Psoas muscle (tissue), 8 donors: ENCODE measurements at regions of chr11 and their contacts with region 1.

Region 1: DNA sequence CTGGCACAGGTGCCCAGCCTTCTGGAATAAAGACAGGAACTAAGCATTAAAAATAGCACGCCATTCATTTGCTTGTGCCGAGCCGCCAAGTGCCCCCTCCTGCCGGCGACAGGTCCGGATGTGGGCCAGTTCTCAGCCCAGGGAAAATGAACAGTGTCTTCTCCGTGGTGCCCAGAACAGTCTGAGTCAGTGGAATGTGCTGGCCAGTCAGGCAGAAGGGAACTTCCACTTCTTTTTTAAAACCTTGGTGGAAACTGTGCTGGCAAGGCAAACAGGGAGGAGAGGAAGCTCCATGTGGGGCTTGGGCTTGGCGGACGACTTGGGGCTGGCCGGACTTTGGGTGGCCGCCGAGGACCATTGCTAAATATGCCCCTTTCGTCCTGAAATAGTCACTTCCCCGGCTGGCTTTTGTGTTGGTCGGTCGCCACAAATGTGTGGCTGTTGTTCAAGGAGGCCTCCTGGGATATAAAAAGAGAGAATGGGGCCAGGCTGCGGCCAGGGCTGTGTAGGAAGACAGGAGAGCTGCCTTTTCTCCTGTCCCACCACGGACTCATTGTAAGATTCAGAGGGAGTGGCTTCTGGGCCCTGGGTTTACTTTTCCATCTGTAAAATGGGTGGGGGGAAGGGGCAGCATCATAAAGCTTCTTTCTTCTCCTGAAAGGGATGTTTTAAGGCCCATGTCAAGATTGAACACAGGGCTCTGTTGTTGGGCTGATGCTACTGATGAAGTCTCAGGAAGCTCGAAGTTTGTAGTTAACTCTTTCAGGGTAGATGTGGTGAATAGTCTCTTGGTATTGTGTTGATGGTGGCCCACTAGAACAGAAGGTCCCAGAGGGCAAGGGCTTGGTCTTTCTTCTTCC is 101.0 kb downstream of the PTPRJ start:
- DNase-seq: peak; percentile 86 to 92
- ATAC-seq: peak; percentile 96 to 98 (median 97)
- H3K4me3 ChIP-seq: peak overlapping the region; percentile 48
- H3K27ac ChIP-seq: peak overlapping the region; percentile 90
- H3K4me1 ChIP-seq: peaks cover 23% of the 10 kb centered on the region
- H3K27me3 ChIP-seq: no peaks in the 10 kb centered on the region
- CTCF ChIP-seq: no peak

Region 2: DNA sequence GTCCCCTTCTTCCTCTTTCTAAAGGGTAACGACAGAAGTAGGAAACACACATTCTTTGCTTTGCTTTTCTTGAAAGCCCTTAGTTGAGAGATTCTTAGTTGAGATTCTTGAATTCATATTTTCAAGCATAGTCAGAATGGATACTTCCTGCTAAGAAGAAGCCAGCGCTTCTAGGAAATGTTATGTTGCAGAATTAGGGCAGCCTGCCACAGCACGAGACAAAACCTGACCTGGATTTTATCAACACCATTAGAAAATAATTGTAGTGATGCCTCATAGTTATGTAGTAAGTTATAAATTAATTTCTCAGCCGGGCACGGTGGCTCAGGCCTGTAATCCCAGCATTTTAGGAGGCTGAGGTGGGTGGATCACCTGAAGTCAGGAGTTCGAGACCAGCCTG is 195.3 kb before region 1 on chr11:
- intact Hi-C with region 1: no loop called
- DNase-seq: peak in 1 of 2 donors; percentile 39
- ATAC-seq: no peak
- H3K4me3 ChIP-seq: no peak overlapping the region
- H3K27ac ChIP-seq: no peak overlapping the region
- H3K4me1 ChIP-seq: no peaks in the 10 kb centered on the region
- H3K27me3 ChIP-seq: no peaks in the 10 kb centered on the region
- CTCF ChIP-seq: no peak

Region 3: GRCh38 chr11:48001438-48002021 is 79.9 kb before region 1 on chr11:
- intact Hi-C with region 1: no loop called
- DNase-seq: no peak
- ATAC-seq: peak in 3 of 4 donors; percentile 20 to 49 (median 30)
- H3K4me3 ChIP-seq: no peak overlapping the region
- H3K27ac ChIP-seq: no peak overlapping the region
- H3K4me1 ChIP-seq: peaks cover 19% of the 10 kb centered on the region
- H3K27me3 ChIP-seq: no peaks in the 10 kb centered on the region
- CTCF ChIP-seq: no peak

Region 4: DNA sequence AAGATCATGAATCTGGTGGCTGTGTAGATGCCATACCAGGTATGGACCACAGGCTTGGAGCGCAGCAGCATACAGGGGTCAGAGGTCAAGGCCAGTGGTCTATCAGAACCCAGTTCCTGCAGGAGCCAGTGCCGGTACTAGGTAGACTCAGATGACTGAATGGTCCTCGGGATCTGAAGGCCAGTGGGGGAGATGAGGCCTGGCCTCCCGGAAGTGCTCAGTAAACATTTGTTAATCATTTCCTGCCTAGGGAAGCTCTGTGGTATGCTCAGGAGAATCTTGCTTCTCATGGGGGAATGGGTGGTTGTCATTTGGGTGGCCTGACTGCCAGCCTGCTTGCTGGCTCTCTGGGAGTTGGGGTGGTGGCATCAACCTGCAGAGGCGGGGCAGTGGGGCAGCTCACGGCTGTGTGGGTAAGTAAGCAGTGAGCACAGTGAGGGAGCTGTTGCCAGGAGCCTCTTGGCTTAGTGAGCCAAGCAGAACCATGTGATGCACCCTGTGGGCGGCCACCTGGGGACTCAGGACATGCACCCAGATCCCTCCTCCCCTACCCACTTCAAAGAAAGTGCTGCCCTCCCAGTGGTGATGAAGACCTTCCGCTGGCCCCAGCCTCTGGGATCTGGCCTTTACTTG is 68.0 kb before region 1 on chr11:
- intact Hi-C with region 1: no loop called
- DNase-seq: no peak
- ATAC-seq: peak in 3 of 4 donors; percentile 33 to 50 (median 49)
- H3K4me3 ChIP-seq: no peak overlapping the region
- H3K27ac ChIP-seq: no peak overlapping the region
- H3K4me1 ChIP-seq: no peaks in the 10 kb centered on the region
- H3K27me3 ChIP-seq: no peaks in the 10 kb centered on the region
- CTCF ChIP-seq: no peak

Region 5: GRCh38 chr11:48024635-48025071 is 56.7 kb before region 1 on chr11:
- intact Hi-C with region 1: no loop called
- DNase-seq: peak in 1 of 2 donors; percentile 53
- ATAC-seq: peak; percentile 51 to 68 (median 64)
- H3K4me3 ChIP-seq: no peak overlapping the region
- H3K27ac ChIP-seq: peak overlapping the region; percentile 68
- H3K4me1 ChIP-seq: peaks cover 22% of the 10 kb centered on the region
- H3K27me3 ChIP-seq: no peaks in the 10 kb centered on the region
- CTCF ChIP-seq: no peak

Region 6: DNA sequence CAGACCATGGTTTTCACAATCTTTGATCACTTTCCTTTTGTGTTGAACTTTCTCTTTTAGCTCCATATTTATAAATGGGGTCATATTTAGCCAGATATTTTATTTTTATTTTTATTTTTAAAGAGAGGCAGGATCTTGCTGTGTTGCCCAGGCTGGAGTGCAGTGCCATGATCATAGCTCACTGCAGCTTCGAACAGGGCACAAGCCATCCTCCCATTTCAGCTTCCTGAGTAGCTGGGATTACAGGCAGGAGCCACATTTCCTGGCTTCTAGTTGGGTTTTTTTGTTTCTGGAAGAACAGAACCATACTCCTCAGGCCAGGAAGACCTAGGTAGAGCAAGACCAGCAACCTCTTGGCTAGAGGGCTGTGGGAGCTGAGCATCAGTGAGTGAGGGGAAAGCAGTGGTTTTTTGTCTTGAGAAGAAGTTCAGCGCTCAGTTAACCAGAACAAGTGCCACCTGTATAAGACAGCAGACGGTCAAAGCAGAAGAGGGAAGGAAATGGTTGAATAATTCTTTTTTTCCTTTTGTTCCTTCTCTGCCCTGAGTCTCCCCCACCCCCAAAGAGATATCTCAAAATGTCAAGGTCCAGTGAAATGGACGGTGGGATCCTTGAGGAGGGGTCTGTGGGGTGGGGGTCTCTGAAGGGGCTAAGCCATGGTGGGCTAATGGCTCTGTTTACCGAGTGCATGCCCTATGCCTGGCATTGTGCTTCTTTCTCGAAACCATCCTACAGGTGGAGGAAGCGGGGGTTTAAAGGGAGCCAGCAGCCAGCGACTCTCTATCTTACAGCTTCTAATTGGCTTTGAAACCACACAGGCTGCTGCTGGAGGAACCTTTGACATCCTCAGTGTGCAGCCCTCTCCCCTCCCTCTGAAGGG is 38.0 kb before region 1 on chr11:
- intact Hi-C with region 1: loop called (anchors 5 to 10 kb)
- DNase-seq: no peak
- ATAC-seq: no peak
- H3K4me3 ChIP-seq: no peak overlapping the region
- H3K27ac ChIP-seq: no peak overlapping the region
- H3K4me1 ChIP-seq: peaks cover 1% of the 10 kb centered on the region
- H3K27me3 ChIP-seq: no peaks in the 10 kb centered on the region
- CTCF ChIP-seq: no peak